ENCODE measurements at regions of chr9 and their contacts with region 1.

Region 1: DNA sequence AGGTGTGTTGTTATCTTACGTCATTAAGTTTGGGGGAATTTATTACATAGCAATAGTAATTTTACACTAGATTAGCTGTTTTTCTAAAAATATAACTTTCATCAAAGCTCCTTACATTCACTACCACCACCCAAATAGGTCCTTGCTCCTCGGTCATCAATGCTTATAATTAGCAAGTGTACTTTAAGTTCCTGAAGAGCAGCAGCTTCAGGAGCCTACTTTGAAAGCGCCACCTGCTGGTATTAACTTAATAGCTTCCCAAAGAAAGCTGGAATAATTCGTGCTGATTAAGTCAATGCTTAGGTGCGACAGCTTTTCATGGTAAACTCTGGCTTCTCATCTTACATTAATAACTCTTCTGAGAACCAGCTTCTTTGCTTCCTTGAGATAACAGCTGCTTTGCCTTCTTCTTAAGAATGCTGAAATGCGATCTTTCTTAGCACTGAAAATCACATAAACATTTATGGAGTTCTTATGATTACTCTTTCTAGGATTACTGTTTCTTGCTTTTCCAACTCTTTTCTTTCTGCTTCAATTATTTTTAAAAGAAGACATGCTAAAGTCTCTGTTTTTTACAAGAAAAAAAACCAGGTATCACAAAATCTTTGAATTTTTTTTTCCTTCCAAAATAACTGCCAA is 10.0 kb upstream of the C5 start:
- DNase-seq: peak in 4 of 5 donors; percentile 10 to 49 (median 45)
- H3K4me3 ChIP-seq: no peak overlapping the region
- H3K4me3 Mint-ChIP-seq: no peak overlapping the region
- H3K27ac ChIP-seq: no peak overlapping the region
- H3K27ac Mint-ChIP-seq: no peak overlapping the region
- H3K4me1 ChIP-seq: no peaks in the 10 kb centered on the region
- H3K4me1 Mint-ChIP-seq: peaks cover 16 to 23% (median 17%) of the 10 kb centered on the region in 3 donors
- H3K27me3 ChIP-seq: no peaks in the 10 kb centered on the region
- H3K27me3 Mint-ChIP-seq: no peaks in the 10 kb centered on the region

Region 2: DNA sequence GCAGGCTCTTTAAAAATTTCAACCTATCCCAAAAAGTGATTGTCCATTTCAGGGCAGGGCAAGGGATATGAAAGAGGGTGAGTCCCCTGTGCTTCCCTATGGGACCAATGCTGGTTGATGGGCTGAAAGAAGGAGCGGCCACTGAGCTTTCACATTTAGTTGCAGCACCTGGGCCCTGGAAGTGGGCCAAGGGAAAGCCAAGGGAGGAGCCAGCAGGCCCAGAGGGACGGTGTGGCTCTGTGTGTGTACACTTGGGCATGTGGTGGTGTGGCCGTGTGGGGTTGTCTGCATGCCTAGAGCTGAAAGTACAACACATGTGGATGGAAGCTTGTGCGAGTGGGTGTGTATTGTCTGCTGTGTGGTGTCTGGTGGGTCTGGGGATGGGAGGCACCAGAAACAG is 203.4 kb before region 1 on chr9:
- CTCF ChIA-PET with region 1: no interaction called
- POLR2A ChIA-PET with region 1: no interaction called
- DNase-seq: no peak
- H3K4me3 ChIP-seq: no peak overlapping the region
- H3K4me3 Mint-ChIP-seq: no peak overlapping the region
- H3K27ac ChIP-seq: no peak overlapping the region
- H3K27ac Mint-ChIP-seq: peak overlapping the region in 4 of 8 donors; percentile 1 to 32 (median 16)
- H3K4me1 ChIP-seq: no peaks in the 10 kb centered on the region
- H3K4me1 Mint-ChIP-seq: peaks cover 0 to 17% (median 8%) of the 10 kb centered on the region in 3 donors
- H3K27me3 ChIP-seq: no peaks in the 10 kb centered on the region
- H3K27me3 Mint-ChIP-seq: no peaks in the 10 kb centered on the region

Region 3: GRCh38 chr9:120982836-120983235 is 77.3 kb before region 1 on chr9:
- CTCF ChIA-PET with region 1: interaction called, 15 read pairs
- POLR2A ChIA-PET with region 1: no interaction called
- DNase-seq: no peak
- H3K4me3 ChIP-seq: no peak overlapping the region
- H3K4me3 Mint-ChIP-seq: no peak overlapping the region
- H3K27ac ChIP-seq: no peak overlapping the region
- H3K27ac Mint-ChIP-seq: no peak overlapping the region
- H3K4me1 ChIP-seq: no peaks in the 10 kb centered on the region
- H3K4me1 Mint-ChIP-seq: peaks cover 0 to 8% (median 4%) of the 10 kb centered on the region in 3 donors
- H3K27me3 ChIP-seq: no peaks in the 10 kb centered on the region
- H3K27me3 Mint-ChIP-seq: peaks cover 0 to 3% of the 10 kb centered on the region in 2 donors

Measured in CD8-positive, alpha-beta memory T cell (primary cell).